Calu3 (cell line): ENCODE measurements at regions of chr6 and their contacts with region 1.

Region 1: DNA sequence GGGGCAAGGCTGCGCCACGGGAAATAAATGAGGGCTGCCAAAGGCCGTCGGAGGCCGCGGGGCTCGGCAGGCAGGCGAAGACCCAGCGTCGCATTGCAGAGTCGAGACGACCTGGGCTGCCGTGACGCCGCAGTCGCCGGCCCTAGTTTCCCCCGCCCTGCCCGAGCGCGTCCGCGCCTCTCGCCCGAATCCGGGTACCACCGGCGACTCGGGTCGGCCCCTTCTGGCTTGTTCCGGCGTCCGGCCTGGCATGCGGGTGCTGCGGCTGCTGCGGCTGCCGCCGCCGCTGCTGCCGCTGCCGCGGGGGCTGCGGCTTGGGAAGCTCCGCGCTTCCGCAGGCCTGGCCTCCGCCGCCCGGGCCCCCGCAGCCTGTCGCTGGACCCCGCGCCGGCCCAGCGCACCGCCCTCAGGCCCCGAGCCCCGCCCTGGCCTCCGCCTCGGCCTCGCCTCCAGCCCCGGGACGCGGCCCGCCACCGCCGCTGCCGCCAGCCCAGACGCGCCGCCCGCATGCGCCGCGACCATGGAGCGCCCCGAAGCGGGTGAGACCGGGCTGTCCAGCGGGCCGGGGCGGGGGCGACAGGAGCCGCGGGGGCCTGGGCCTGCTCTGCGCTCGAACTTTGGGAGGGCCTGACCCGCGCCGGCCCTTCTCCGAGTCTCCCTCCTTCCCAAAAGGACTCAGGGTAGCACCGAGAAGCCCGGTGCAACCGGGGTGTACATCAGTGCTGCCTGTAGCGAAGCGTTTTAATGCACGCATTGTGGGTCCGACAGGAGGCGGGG is at the start of gene AKAP7:
- DNase-seq: peak; percentile 86
- H3K4me3 Mint-ChIP-seq: peak within 1 kb of the TSS; percentile 81
- H3K27ac Mint-ChIP-seq: peak within 1 kb of the TSS; percentile 86
- H3K4me1 Mint-ChIP-seq: peaks cover 18% of the 10 kb centered on the region
- H3K27me3 Mint-ChIP-seq: no peaks in the 10 kb centered on the region
- CTCF ChIP-seq: no peak
- total RNA-seq, gene AKAP7: 6.7 and 7.7 TPM in 2 replicates

Region 2: DNA sequence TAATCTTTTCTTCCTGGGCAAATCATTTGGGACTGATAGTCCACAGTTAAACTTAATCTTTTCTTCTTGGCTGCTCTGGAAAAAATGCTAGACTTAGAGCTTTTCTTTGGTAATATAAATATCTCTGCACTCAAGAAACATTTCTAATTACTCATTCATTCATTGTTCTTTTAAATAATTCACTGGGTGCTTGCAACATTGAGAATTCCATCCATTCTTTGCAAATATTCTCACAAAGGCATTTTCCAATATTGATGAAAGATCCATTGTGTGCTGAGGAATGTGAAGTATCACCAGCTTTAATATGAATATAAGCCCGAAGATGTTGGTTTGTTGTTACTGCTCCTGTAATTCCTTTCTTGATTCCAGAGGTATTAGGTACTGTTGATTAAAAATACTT is 38.2 kb after region 1 on chr6:
- CTCF ChIA-PET with region 1: no interaction called
- intact Hi-C with region 1: loop called (anchors 5 kb)
- DNase-seq: no peak
- H3K4me3 Mint-ChIP-seq: no peak overlapping the region
- H3K27ac Mint-ChIP-seq: no peak overlapping the region
- H3K4me1 Mint-ChIP-seq: peaks cover 28% of the 10 kb centered on the region
- H3K27me3 Mint-ChIP-seq: no peaks in the 10 kb centered on the region
- CTCF ChIP-seq: no peak

Region 3: DNA sequence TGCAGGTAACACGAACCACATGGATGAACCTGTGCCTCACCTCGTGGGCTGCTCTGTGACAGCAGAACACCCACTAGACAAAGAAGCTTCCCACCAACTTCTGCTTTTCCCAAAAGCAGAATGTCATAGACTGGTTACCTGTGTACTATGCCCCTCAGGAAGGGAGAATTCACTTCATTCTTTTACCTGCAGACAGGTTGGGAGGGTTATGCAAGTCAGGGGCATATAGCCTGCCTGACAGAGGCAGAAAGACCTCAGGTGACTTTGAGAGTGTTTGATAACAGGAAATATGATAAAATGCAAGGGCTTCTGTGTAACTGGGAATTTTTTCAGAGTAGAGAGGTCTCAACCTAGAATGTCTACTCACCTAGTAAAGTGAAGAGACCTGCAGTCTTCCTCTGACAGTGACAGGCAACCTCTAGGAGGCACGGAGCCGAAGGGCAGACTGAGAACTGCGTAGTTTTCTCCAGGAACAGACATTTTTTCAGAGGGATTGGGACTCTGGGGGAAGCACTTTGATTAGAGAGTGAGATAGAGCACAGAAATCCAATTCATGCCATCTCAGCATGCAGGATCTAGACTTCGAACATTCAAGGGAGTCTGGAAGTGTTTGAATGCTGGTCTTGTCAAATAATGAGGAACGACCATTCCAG is 213.0 kb after region 1 on chr6:
- CTCF ChIA-PET with region 1: no interaction called
- intact Hi-C with region 1: no loop called
- DNase-seq: no peak
- H3K4me3 Mint-ChIP-seq: no peak overlapping the region
- H3K27ac Mint-ChIP-seq: no peak overlapping the region
- H3K4me1 Mint-ChIP-seq: no peaks in the 10 kb centered on the region
- H3K27me3 Mint-ChIP-seq: peaks cover 34% of the 10 kb centered on the region
- CTCF ChIP-seq: no peak